ENCODE measurements at regions of chr22 and their contacts with region 1.

Region 1: DNA sequence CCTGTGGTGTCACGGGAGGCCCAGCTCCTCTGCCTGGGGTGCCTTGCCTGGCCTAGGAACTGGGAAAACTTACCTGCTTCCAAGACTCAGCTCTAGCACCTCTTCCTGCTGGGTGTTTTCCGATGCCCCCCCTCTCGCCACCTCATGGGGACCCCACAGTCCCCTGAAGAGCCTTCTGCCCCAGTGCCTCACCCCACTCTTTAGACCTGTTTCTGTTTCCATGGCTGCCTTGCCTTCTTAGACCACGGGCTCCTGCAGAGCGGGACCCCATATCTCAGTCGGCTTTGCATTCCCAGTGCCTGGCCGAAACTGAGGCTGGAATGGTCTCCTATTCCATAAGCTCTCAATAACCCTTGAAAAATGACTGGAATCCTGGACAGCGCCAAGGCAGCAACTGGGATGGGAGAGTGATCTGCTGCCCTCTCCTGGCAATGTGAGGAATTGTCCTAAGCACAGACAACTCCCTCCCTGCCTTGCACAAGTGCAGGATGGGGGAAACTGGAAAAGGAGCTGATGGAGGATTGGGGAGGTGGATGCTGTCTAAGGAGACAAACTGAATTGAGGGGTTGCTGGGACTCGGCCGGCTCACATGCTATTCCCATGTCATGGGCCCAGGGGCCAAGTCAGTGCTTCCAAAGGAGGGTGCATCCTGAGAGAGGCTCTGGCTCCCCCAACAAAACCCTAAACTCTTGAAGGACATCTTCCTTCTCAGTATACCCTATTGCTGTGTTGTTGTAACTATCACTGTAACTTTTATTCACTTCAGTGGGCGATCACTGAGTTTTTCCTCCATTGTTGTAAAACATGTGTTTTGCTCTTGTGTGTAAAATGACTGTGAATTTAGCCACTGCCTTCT is 26.6 kb upstream of the IL17RA start:
- DNase-seq: no peak
- H3K4me3 ChIP-seq: no peak overlapping the region
- H3K27ac ChIP-seq: no peak overlapping the region
- H3K4me1 ChIP-seq: peaks cover 0 to 8% (median 2%) of the 10 kb centered on the region in 6 donors
- H3K27me3 ChIP-seq: peaks cover 0 to 11% (median 0%) of the 10 kb centered on the region in 7 donors
- CTCF ChIP-seq: peak; percentile 66 to 92 (median 87)
- POLR2A ChIP-seq: no peak

Region 2: GRCh38 chr22:16917144-16918003 is 140.8 kb before region 1 on chr22:
- intact Hi-C with region 1: loop called (anchors 5 kb)
- DNase-seq: no peak
- H3K4me3 ChIP-seq: no peak overlapping the region
- H3K27ac ChIP-seq: no peak overlapping the region
- H3K4me1 ChIP-seq: peaks cover 0 to 6% (median 0%) of the 10 kb centered on the region in 6 donors
- H3K27me3 ChIP-seq: peaks cover 0 to 47% (median 0%) of the 10 kb centered on the region in 7 donors
- CTCF ChIP-seq: peak in 10 of 11 experiments; percentile 23 to 71 (median 55)
- POLR2A ChIP-seq: no peak

Region 3: DNA sequence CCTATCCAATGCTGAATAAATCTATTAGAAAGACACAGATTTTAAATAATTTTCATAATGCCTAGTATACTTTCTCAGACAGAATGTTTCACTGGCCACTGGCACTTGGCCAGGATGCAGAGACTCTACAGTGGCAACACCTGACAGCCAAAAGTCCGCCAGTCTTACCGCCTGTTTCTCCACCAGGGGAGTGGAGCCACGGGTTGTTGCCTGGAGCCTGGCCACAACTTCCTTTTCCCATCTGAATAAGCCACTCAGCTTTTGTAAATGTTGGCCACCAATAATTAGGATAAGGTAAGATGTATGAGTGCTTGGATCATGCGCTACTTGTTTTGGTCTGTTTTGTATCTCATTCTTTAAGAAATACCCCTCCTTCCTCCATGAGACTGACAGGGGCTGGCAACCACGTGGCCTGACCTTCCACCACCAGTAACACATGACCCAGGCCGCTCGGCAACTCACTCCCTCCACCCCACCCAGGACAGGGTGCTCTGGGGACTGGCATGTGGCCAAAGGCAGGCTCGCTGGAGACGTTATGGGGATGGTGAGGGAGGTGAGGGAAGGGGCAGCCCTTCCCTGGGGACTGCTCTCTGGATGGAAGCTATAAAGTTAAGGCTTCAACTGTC is 809.1 kb after region 1 on chr22:
- intact Hi-C with region 1: no loop called
- DNase-seq: no peak
- H3K4me3 ChIP-seq: no peak overlapping the region
- H3K27ac ChIP-seq: peak overlapping the region in 1 of 8 donors; percentile 21
- H3K4me1 ChIP-seq: peaks cover 0 to 6% (median 3%) of the 10 kb centered on the region in 6 donors
- H3K27me3 ChIP-seq: no peaks in the 10 kb centered on the region
- CTCF ChIP-seq: no peak
- POLR2A ChIP-seq: no peak

Measured in spleen (tissue), 13 donors.